Left ventricle myocardium inferior (tissue), 1 donor: ENCODE measurements at regions of chr2 and their contacts with region 1.

Region 1: GRCh38 chr2:47767880-47768609 is 14.9 kb upstream of the MSH6 start:
- DNase-seq: peak; percentile 56
- H3K4me3 ChIP-seq: no peak overlapping the region
- H3K27ac ChIP-seq: no peak overlapping the region
- H3K4me1 ChIP-seq: peaks cover 5% of the 10 kb centered on the region
- H3K27me3 ChIP-seq: peaks cover 18% of the 10 kb centered on the region
- CTCF ChIP-seq: peak; percentile 100

Region 2: DNA sequence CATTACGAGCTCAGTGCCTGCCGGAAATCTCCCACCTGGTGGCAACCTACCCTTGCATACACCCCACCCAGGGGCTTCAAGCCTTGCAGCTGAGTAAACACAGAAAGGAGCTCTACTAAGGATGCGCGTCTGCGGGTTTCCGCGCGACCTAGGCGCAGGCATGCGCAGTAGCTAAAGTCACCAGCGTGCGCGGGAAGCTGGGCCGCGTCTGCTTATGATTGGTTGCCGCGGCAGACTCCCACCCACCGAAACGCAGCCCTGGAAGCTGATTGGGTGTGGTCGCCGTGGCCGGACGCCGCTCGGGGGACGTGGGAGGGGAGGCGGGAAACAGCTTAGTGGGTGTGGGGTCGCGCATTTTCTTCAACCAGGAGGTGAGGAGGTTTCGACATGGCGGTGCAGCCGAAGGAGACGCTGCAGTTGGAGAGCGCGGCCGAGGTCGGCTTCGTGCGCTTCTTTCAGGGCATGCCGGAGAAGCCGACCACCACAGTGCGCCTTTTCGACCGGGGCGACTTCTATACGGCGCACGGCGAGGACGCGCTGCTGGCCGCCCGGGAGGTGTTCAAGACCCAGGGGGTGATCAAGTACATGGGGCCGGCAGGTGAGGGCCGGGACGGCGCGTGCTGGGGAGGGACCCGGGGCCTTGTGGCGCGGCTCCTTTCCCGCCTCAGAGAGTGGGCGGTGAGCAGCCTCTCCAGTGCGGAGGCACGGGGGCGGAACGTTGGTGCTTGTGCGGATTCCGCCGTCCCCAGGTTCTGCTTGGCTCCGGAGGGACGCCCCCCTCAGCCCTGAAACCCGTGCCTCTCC is 365.0 kb before region 1 on chr2 and contains the start of gene MSH2:
- intact Hi-C with region 1: no loop called
- DNase-seq: peak; percentile 92
- H3K4me3 ChIP-seq: peak within 1 kb of the TSS; percentile 96
- H3K27ac ChIP-seq: peak within 1 kb of the TSS; percentile 75
- H3K4me1 ChIP-seq: peaks cover 23% of the 10 kb centered on the region
- H3K27me3 ChIP-seq: no peaks in the 10 kb centered on the region
- CTCF ChIP-seq: no peak
- total RNA-seq, gene MSH2: 14.8 TPM

Region 3: DNA sequence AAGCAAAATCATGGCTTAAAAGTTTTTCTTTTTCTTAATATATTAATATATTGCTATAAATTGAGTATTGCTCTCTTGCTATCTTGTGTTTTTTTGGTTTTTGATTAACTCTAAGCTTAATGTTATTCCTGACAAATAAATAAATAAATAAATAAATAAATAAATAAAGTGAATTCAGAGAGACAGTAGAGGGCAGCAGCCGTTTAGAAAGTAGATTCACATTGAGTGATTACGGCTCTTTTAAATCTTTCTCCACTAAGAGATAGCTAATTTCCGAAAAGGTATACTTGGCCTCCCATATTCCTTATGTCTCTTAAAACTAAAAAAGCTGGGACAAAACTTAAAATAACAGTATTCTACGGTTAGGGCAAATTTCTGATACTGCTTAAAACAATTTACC is 330.8 kb before region 1 on chr2:
- intact Hi-C with region 1: loop called (anchors 5 kb)
- DNase-seq: no peak
- H3K4me3 ChIP-seq: no peak overlapping the region
- H3K27ac ChIP-seq: no peak overlapping the region
- H3K4me1 ChIP-seq: no peaks in the 10 kb centered on the region
- H3K27me3 ChIP-seq: no peaks in the 10 kb centered on the region
- CTCF ChIP-seq: peak; percentile 70

Region 4: DNA sequence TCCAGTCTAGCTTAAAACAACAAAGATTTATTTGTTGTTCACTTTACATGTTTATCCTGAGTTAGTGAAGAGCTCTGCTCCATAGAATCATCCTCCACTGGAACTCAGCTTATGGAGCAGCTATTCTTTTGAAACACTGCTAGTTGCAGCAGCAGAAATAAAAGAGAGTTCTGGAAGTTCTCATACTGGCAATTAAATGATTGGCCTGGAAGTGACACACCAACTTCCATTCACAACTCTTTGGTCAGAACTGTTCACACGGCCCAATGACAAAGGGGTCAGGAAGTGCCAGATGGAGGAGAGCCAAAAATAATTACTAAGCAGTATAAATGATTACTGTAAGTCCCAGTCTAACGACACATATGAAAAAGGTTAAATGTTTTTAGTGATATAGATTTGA is 99.2 kb after region 1 on chr2:
- intact Hi-C with region 1: no loop called
- DNase-seq: no peak
- H3K4me3 ChIP-seq: no peak overlapping the region
- H3K27ac ChIP-seq: peak overlapping the region; percentile 63
- H3K4me1 ChIP-seq: peaks cover 79% of the 10 kb centered on the region
- H3K27me3 ChIP-seq: no peaks in the 10 kb centered on the region
- CTCF ChIP-seq: no peak

Region 5: DNA sequence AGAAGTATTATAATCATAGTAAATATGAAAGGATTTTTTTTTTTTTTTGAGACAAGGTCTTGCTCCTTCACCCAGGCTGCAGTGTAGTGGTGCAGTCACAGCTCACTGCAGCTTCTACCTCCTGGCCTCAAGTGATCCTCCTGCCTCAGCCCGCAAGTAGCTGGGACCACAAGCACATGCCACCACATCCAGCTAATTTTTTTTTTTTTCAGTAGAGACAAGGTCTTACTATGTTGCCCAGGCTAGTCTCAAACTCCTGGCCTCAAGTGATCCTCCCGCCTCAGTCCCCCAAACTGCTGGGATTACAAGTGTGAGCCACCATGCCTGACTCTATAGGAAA is 460.3 kb after region 1 on chr2:
- intact Hi-C with region 1: no loop called
- DNase-seq: no peak
- H3K4me3 ChIP-seq: no peak overlapping the region
- H3K27ac ChIP-seq: no peak overlapping the region
- H3K4me1 ChIP-seq: no peaks in the 10 kb centered on the region
- H3K27me3 ChIP-seq: no peaks in the 10 kb centered on the region
- CTCF ChIP-seq: no peak

Region 6: GRCh38 chr2:48292393-48292792 is 524.3 kb after region 1 on chr2:
- intact Hi-C with region 1: no loop called
- DNase-seq: no peak
- H3K4me3 ChIP-seq: no peak overlapping the region
- H3K27ac ChIP-seq: no peak overlapping the region
- H3K4me1 ChIP-seq: no peaks in the 10 kb centered on the region
- H3K27me3 ChIP-seq: no peaks in the 10 kb centered on the region
- CTCF ChIP-seq: no peak